ENCODE measurements at regions of chr11 and their contacts with region 1.

Region 1: DNA sequence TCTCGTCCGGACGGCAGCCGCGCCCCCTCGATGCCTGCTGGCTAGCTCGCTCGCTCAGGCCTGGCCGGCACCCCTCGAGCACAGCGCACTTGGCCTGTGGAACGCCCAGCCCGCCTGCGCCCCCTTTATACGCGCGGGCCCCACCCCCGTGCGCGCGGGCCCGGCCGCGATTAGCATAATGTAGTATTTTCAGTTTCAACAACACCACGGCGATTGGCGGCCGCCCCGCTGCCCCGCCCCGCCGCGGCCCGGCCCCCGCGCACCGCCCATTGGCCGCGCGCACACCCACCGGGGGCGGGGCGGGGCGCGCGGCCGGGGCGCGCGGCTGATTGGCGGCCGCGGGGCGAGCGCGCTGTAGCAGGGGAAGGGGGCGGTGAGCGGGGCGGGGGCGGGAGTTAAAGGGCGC is at the start of gene CDKN1C:
- DNase-seq: peak; percentile 90
- CTCF ChIP-seq: no peak

Region 2: DNA sequence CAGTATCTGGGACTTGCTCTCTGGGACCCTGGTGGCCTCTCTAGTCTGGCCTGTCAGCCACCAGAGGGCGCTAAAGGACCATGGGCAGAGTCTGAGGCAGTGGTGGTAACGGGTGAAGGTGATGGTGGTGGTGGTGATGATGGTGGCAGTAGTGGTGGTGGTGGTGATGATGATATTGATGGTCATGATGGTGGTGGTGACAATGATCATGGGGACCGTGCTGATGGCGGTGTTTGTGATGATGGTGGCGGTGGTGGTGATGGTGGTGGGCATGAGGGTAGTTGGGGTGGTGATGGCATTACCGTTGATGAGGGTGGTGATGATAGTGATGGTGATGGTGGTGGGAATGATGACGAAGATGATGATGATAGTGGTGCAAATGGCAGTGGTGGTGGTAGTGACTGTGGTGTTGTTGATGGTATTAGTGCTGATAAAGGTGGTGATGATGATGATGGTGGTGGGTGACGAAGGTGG is 457.3 kb before region 1 on chr11:
- CTCF ChIA-PET with region 1: interaction called, 33 read pairs
- POLR2A ChIA-PET with region 1: no interaction called
- DNase-seq: peak; percentile 77
- CTCF ChIP-seq: peak; percentile 92

Region 3: DNA sequence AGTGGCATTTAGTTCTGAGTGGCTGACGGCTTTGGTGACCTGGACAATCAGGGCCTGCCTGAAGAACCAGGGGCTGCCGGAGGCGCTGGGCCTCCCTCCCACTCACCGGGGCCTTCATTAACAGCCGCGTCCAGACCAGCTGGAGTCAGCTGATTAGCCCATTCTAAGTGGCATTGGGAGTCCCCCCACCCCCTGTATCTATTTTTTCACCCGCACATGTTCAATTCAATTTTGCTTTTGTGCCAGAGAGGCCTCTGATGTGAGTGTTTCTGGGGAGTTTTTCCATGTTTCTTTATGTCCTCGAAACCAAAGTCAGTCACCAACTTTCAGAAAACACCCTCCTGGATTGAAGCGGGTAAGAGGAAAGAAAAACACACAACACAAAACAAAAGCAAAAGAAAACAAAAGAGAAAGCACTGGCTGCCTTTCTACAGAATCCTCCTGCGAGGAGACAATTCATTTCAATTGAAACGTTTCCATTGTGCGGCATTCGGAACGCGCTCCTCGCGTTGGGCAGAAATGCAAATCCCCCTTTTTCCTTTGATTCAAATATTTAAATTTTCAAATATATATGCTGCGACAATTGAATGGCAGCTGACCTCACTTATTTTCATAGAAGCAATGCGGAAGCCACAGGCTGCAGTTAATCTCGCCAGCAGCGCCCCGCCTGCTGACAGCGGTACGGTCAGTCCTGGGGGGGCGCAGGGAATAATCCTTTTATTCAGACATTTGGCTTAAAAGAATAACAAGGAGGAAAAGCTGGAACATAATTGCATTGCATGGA is 17.8 kb before region 1 on chr11:
- CTCF ChIA-PET with region 1: no interaction called
- POLR2A ChIA-PET with region 1: no interaction called
- DNase-seq: no peak
- CTCF ChIP-seq: no peak

Region 4: DNA sequence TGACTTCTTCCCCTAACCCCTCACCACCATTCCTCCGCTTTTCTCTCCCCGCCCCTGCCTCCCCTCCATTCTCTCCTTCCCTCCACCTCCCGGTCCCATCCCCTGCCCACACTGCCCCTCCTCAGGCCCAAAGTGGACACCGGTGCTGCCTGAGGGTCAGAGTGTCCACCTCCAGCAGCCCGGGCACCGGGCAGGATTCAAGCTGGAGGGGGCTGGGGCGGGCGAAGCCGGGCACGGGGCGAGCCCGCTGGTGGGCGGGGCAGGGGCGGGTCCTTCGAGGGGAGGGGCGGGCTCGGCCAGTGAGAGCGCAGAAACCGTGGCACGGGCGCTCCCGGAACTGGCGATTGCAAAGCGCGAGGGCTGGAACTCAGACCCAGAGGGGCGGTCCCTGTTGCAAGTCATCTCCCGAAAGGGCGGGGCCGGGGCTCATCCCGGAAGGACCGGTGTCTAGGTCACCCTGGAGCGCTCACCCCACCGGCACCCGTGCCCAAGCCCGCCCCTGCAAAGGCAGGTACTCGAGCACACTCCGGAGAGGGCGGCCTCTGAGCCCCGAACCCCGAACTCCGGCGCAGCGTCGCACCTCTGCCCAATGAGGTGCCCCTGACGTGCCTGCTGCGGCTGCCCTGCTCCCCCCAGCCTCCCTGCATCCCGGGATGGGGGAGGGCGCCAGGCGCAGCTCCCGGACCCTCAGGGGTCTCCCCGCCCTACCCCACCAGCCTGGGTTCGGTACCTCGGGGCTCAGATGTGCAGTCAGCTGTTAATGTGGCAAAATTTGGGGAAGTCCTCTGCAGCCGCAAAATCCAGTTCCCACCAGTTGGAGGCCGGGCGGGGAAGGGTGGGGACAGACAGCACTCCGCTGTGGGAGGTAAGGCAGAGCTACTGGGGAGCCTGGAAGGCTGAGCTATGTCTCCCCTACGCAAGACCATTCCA is 16.4 kb after region 1 on chr11:
- CTCF ChIA-PET with region 1: interaction called, 60 read pairs
- POLR2A ChIA-PET with region 1: no interaction called
- DNase-seq: peak; percentile 99
- CTCF ChIP-seq: no peak

Region 5: DNA sequence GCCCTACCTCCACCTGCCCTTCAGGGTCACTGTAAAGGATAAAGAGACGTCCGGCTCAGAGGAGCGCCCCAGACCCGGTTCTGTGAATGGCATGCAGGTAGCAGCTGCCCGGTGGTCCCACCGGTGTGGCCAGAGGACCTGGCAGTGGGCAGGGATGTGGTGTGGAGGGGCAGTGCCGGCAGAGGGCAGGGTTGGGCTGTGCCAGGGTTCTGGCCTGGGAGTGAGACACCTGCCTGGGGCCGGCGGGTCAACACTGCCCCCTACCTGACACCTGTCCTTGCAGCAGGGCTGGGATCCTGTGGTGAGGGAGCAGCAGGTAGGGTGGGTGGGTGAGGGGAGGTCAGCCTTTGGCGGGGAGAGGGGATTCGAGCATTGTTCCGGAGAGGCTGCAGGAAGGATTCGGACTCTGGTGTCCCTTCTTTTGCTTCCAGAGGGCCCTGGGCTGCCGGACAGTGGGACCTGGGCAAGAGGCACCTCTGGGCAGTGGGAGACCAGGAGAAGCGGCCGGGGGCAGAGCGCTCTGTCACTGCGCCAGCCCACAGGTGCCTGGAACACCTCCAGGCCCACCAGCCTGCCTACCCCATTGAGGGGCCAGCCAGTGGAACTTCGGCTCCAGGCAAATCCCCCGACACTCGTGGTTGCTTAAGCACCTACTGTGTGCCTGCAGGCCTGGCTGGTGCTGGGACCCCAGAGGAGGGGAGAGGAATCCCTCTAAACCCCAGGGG is 45.2 kb after region 1 on chr11:
- CTCF ChIA-PET with region 1: interaction called, 11 read pairs
- POLR2A ChIA-PET with region 1: no interaction called
- DNase-seq: peak; percentile 82
- CTCF ChIP-seq: peak; percentile 72